CD4-positive, alpha-beta T cell (primary cell): ENCODE measurements at regions of chr12 and their contacts with region 1.

Region 1: DNA sequence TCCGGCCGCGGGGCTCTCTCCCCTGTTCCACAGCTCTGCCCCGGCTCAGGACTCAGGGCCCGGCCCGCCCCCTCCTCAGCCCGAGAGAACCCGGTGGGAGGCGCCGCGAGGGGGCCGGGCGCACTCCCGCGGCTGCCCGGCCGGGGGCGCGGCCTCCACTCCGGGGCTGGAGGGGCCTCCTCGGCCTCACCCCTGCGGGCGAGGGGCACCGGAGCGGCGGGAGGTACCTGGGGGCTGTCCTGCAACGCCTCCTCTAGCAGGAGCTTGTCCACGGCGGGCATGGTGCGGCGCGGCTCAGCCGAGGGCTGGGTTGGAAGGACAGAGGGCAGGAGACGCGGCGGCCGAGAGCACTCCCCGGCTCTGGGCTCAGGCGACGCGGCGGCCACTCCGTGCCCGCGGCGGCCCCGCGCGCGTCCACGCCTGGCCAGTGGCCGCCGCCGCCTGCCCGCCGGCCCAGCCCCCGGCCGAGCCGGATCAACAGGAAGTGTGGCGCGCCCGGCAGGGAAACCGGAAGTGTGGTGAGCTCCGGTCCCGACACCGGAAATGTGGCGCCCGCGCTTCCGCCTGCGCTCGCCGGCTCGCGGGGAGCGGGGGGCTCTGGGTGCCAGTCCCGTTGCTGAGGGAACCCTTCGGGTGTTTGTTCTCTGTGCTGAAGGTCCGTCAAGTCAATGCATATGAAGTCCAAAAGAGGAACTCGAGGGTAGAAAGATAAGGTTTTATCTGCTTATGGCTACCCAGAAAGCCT is at the start of gene APPL2:
- DNase-seq: peak; percentile 55 to 90 (median 80)
- ATAC-seq: peak; percentile 76
- H3K4me3 ChIP-seq: peak within 1 kb of the TSS; percentile 74
- H3K4me3 Mint-ChIP-seq: peak within 1 kb of the TSS; percentile 94
- H3K27ac ChIP-seq: peak within 1 kb of the TSS; percentile 68 to 83
- H3K27ac Mint-ChIP-seq: peak within 1 kb of the TSS; percentile 90
- H3K4me1 ChIP-seq: peaks cover 39% of the 10 kb centered on the region
- H3K4me1 Mint-ChIP-seq: peaks cover 47% of the 10 kb centered on the region
- H3K27me3 ChIP-seq: no peaks in the 10 kb centered on the region
- H3K27me3 Mint-ChIP-seq: no peaks in the 10 kb centered on the region
- CTCF ChIP-seq: peak; percentile 48
- total RNA-seq, gene APPL2: 58.8 to 59.9 TPM

Region 2: GRCh38 chr12:105252901-105253300 is 17.0 kb after region 1 on chr12:
- CTCF ChIA-PET with region 1: no interaction called
- POLR2A ChIA-PET with region 1: no interaction called
- intact Hi-C with region 1: no loop called
- DNase-seq: no peak
- ATAC-seq: no peak
- H3K4me3 ChIP-seq: no peak overlapping the region
- H3K4me3 Mint-ChIP-seq: no peak overlapping the region
- H3K27ac ChIP-seq: no peak overlapping the region
- H3K27ac Mint-ChIP-seq: no peak overlapping the region
- H3K4me1 ChIP-seq: no peaks in the 10 kb centered on the region
- H3K4me1 Mint-ChIP-seq: peaks cover 5% of the 10 kb centered on the region
- H3K27me3 ChIP-seq: no peaks in the 10 kb centered on the region
- H3K27me3 Mint-ChIP-seq: no peaks in the 10 kb centered on the region
- CTCF ChIP-seq: no peak

Region 3: GRCh38 chr12:105330283-105330930 is 94.5 kb after region 1 on chr12 and contains the start of gene C12orf75:
- CTCF ChIA-PET with region 1: interaction called, 4 read pairs
- POLR2A ChIA-PET with region 1: interaction called, 25 read pairs
- intact Hi-C with region 1: loop called in 1 of 2 experiments (anchors 5 kb)
- DNase-seq: peak; percentile 60 to 93 (median 79)
- ATAC-seq: peak; percentile 82
- H3K4me3 ChIP-seq: peak within 1 kb of the TSS; percentile 72
- H3K4me3 Mint-ChIP-seq: peak within 1 kb of the TSS; percentile 87
- H3K27ac ChIP-seq: peak within 1 kb of the TSS; percentile 32 to 63
- H3K27ac Mint-ChIP-seq: peak within 1 kb of the TSS; percentile 87
- H3K4me1 ChIP-seq: peaks cover 30% of the 10 kb centered on the region
- H3K4me1 Mint-ChIP-seq: peaks cover 55% of the 10 kb centered on the region
- H3K27me3 ChIP-seq: no peaks in the 10 kb centered on the region
- H3K27me3 Mint-ChIP-seq: no peaks in the 10 kb centered on the region
- CTCF ChIP-seq: no peak
- total RNA-seq, gene C12orf75: 16.7 to 17.0 TPM